ENCODE measurements at regions of chr6 and their contacts with region 1.

Region 1: DNA sequence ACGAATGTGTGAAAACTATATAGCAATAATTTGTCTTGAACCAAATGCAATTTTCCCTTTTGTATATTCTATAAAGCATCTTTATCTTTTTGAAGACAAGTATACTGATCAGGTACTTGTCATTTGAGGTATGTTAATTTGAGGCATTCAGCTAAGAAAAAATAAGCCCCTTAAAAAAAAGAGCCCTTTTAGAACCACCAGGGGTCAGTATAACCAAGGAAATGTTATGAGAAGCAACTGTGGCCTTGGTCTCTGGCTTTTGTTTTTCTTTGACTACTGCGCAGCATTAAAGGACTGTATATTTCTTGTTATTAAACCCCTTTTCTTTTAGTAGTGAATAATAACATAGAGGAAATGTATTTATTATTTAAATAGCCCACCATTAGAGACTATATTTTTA is 43.1 kb downstream of the CD109 start:
- DNase-seq: peak; percentile 78
- ATAC-seq: peak; percentile 78
- H3K4me3 ChIP-seq: no peak overlapping the region
- H3K27ac ChIP-seq: no peak overlapping the region
- H3K4me1 ChIP-seq: peaks cover 2% of the 10 kb centered on the region; the same call in 1 of the 2 replicates
- H3K27me3 ChIP-seq: no peaks in the 10 kb centered on the region
- CTCF ChIP-seq: peak; percentile 86
- POLR2A ChIP-seq: no peak
- RAD21 ChIP-seq: peak; percentile 92

Region 2: GRCh38 chr6:73798592-73798991 is 59.5 kb after region 1 on chr6:
- CTCF ChIA-PET with region 1: no interaction called
- POLR2A ChIA-PET with region 1: no interaction called
- dilution Hi-C with region 1: no loop called
- in situ Hi-C with region 1: no loop called
- intact Hi-C with region 1: loop called (anchors 1 kb)
- DNase-seq: peak; percentile 99
- ATAC-seq: peak; percentile 89
- H3K4me3 ChIP-seq: no peak overlapping the region
- H3K27ac ChIP-seq: peak overlapping the region; percentile 76; the same call in 1 of the 2 replicates
- H3K4me1 ChIP-seq: peaks cover 13% of the 10 kb centered on the region
- H3K27me3 ChIP-seq: no peaks in the 10 kb centered on the region
- CTCF ChIP-seq: peak; percentile 77
- POLR2A ChIP-seq: no peak
- RAD21 ChIP-seq: peak; percentile 51

Region 3: GRCh38 chr6:73854998-73855718 is 116.1 kb after region 1 on chr6:
- CTCF ChIA-PET with region 1: no interaction called
- POLR2A ChIA-PET with region 1: no interaction called
- dilution Hi-C with region 1: no loop called
- in situ Hi-C with region 1: no loop called
- intact Hi-C with region 1: loop called (anchors 5 kb)
- DNase-seq: peak; percentile 73
- ATAC-seq: peak; percentile 53; the same call in 1 of the 2 replicates
- H3K4me3 ChIP-seq: no peak overlapping the region
- H3K27ac ChIP-seq: no peak overlapping the region
- H3K4me1 ChIP-seq: peaks cover 4% of the 10 kb centered on the region
- H3K27me3 ChIP-seq: no peaks in the 10 kb centered on the region
- CTCF ChIP-seq: peak; percentile 86
- POLR2A ChIP-seq: no peak
- RAD21 ChIP-seq: peak; percentile 78

Region 4: DNA sequence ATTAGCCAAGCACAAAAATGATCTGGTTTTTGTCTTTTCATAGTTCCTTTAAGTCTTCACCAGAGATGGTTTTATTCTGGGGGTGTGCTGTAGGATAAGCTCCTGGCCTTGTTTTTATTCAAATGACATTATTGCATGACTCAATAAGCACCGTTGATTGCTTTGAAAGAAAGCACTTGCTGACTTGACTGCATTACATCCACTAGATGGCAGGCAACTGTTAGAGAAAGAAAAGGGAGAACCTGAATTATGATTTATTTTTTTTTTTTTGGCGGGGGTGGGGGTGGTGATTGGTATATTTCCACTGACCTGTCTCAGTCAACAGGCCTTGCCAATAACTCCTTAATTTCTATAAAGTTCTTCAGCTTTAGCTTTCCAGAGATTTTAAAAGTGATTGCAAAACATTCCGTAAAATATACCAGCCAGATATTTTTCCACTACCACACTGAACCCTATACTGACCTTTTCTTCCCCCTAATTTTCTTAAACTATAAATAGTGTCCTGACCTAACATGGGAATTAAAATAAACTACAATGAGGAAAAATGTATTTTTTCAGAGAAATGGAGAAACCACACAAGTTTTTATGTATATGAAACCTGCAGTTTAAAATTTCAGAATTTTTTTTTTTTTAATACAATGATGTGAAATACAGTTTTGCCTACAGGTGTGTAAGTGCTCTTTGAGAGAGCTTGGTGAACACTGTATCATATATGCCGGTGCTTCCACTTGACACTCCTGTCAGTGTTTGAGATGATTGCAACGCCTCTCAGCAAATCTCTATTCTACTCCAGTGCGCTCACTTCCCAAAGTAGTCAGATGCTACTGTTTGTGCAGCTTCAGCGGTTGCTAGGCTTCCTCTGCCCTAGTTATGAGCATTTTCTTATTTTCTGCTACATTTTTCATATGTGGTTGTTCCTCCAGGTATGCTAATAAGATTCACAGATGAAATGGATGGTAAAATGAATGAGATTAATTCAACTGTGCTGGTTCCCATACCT is 231.2 kb after region 1 on chr6:
- CTCF ChIA-PET with region 1: no interaction called
- POLR2A ChIA-PET with region 1: no interaction called
- dilution Hi-C with region 1: no loop called
- in situ Hi-C with region 1: no loop called
- intact Hi-C with region 1: loop called (anchors 5 kb)
- DNase-seq: peak; percentile 67
- ATAC-seq: peak; percentile 66
- H3K4me3 ChIP-seq: no peak overlapping the region
- H3K27ac ChIP-seq: no peak overlapping the region
- H3K4me1 ChIP-seq: peaks cover 2% of the 10 kb centered on the region; the same call in 1 of the 2 replicates
- H3K27me3 ChIP-seq: no peaks in the 10 kb centered on the region
- CTCF ChIP-seq: peak; percentile 75
- POLR2A ChIP-seq: no peak
- RAD21 ChIP-seq: peak; percentile 68

Region 5: GRCh38 chr6:75098709-75099108 is 1359.6 kb after region 1 on chr6:
- CTCF ChIA-PET with region 1: no interaction called
- POLR2A ChIA-PET with region 1: no interaction called
- dilution Hi-C with region 1: no loop called
- in situ Hi-C with region 1: no loop called
- intact Hi-C with region 1: loop called (anchors 5 kb)
- DNase-seq: peak; percentile 98
- ATAC-seq: peak; percentile 73
- H3K4me3 ChIP-seq: no peak overlapping the region
- H3K27ac ChIP-seq: peak overlapping the region; percentile 78; the same call in 1 of the 2 replicates
- H3K4me1 ChIP-seq: peaks cover 27% of the 10 kb centered on the region
- H3K27me3 ChIP-seq: no peaks in the 10 kb centered on the region
- CTCF ChIP-seq: no peak
- POLR2A ChIP-seq: no peak
- RAD21 ChIP-seq: no peak